ENCODE measurements at regions of chr17 and their contacts with region 1.

Region 1: GRCh38 chr17:39174907-39175694 is 9.1 kb upstream of the ARL5C start:
- DNase-seq: no peak
- H3K4me3 ChIP-seq: no peak overlapping the region
- H3K27ac ChIP-seq: no peak overlapping the region
- H3K4me1 ChIP-seq: peaks cover 10% of the 10 kb centered on the region
- H3K27me3 ChIP-seq: no peaks in the 10 kb centered on the region
- CTCF ChIP-seq: peak; percentile 67 to 76

Region 2: DNA sequence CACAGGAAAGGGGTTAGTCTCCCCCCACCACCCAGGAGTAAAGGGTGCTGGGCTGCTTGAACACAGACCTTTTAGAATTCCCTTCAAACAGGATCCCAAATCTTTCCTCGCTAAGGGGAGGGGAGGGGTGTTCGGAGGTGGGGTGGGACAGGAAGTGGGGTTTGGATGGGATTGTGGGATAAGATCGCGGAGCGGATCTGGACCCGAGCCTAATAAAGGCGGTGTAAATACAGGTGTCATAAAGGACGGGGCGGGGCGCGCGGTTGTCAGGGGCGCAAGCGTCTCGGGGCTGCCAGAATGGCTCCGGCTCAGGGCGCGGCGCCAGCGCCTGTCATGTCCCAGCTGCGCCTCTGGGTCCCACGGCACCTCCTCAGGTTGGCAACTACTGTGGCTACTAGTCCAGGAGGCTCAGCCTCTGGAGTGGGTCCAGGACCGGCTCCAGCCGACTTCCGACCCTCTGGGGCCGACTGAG is 148.1 kb before region 1 on chr17:
- CTCF ChIA-PET with region 1: interaction called, 11 read pairs
- dilution Hi-C with region 1: no loop called
- in situ Hi-C with region 1: no loop called
- intact Hi-C with region 1: no loop called
- DNase-seq: peak; percentile 16
- H3K4me3 ChIP-seq: peak overlapping the region; percentile 32 to 38 (median 38)
- H3K27ac ChIP-seq: no peak overlapping the region
- H3K4me1 ChIP-seq: peaks cover 9% of the 10 kb centered on the region
- H3K27me3 ChIP-seq: peaks cover 5% of the 10 kb centered on the region
- CTCF ChIP-seq: no peak